ENCODE measurements at regions of chr15 and their contacts with region 1.

Region 1: GRCh38 chr15:40217159-40217824 is 21.6 kb upstream of the PAK6 start:
- DNase-seq: peak; percentile 26
- ATAC-seq: peak; percentile 95
- H3K4me3 ChIP-seq: no peak overlapping the region
- H3K27ac ChIP-seq: no peak overlapping the region
- H3K4me1 ChIP-seq: no peaks in the 10 kb centered on the region
- H3K27me3 ChIP-seq: no peaks in the 10 kb centered on the region
- CTCF ChIP-seq: peak; percentile 72 to 87 (median 82)
- EP300 ChIP-seq: no peak
- POLR2A ChIP-seq: no peak
- RAD21 ChIP-seq: peak; percentile 92

Region 2: GRCh38 chr15:39887832-39888231 is 329.5 kb before region 1 on chr15:
- CTCF ChIA-PET with region 1: interaction called, 13 read pairs
- POLR2A ChIA-PET with region 1: no interaction called
- RAD21 ChIA-PET with region 1: interaction called, 5 read pairs
- SMC1A ChIA-PET with region 1: no interaction called
- in situ Hi-C with region 1: no loop called
- intact Hi-C with region 1: no loop called
- DNase-seq: no peak
- ATAC-seq: peak; percentile 75
- H3K4me3 ChIP-seq: no peak overlapping the region
- H3K27ac ChIP-seq: no peak overlapping the region
- H3K4me1 ChIP-seq: no peaks in the 10 kb centered on the region
- H3K27me3 ChIP-seq: no peaks in the 10 kb centered on the region; a peak in 1 of 4 replicates
- CTCF ChIP-seq: peak; percentile 20 to 55 (median 35); a peak in 4 of 6 replicates
- EP300 ChIP-seq: no peak
- POLR2A ChIP-seq: no peak
- RAD21 ChIP-seq: peak; percentile 26; the same call in 1 of the 2 replicates

Region 3: GRCh38 chr15:40197434-40197833 is 19.9 kb before region 1 on chr15:
- CTCF ChIA-PET with region 1: interaction called, 20 read pairs
- POLR2A ChIA-PET with region 1: no interaction called
- RAD21 ChIA-PET with region 1: interaction called, 3 read pairs
- SMC1A ChIA-PET with region 1: interaction called, 7 read pairs
- in situ Hi-C with region 1: no loop called
- intact Hi-C with region 1: no loop called
- DNase-seq: no peak
- ATAC-seq: no peak
- H3K4me3 ChIP-seq: no peak overlapping the region
- H3K27ac ChIP-seq: no peak overlapping the region
- H3K4me1 ChIP-seq: no peaks in the 10 kb centered on the region
- H3K27me3 ChIP-seq: no peaks in the 10 kb centered on the region
- CTCF ChIP-seq: no peak
- EP300 ChIP-seq: no peak
- POLR2A ChIP-seq: no peak
- RAD21 ChIP-seq: no peak

Region 4: GRCh38 chr15:40238532-40239403 is 21.5 kb after region 1 on chr15 and contains the start of gene PAK6:
- CTCF ChIA-PET with region 1: interaction called, 15 read pairs
- POLR2A ChIA-PET with region 1: interaction called, 6 read pairs
- RAD21 ChIA-PET with region 1: interaction called, 5 read pairs
- SMC1A ChIA-PET with region 1: interaction called, 6 read pairs
- in situ Hi-C with region 1: no loop called
- intact Hi-C with region 1: no loop called
- DNase-seq: no peak
- ATAC-seq: peak; percentile 61
- H3K4me3 ChIP-seq: peak within 1 kb of the TSS; percentile 55
- H3K27ac ChIP-seq: no peak within 1 kb of the TSS
- H3K4me1 ChIP-seq: peaks cover 10% of the 10 kb centered on the region
- H3K27me3 ChIP-seq: no peaks in the 10 kb centered on the region; a peak in 1 of 4 replicates
- CTCF ChIP-seq: no peak
- EP300 ChIP-seq: no peak
- POLR2A ChIP-seq: no peak
- RAD21 ChIP-seq: no peak
- polyA plus RNA-seq, gene PAK6: 0.07 TPM in 1 of 2 experiments, not detected in the other

Region 5: DNA sequence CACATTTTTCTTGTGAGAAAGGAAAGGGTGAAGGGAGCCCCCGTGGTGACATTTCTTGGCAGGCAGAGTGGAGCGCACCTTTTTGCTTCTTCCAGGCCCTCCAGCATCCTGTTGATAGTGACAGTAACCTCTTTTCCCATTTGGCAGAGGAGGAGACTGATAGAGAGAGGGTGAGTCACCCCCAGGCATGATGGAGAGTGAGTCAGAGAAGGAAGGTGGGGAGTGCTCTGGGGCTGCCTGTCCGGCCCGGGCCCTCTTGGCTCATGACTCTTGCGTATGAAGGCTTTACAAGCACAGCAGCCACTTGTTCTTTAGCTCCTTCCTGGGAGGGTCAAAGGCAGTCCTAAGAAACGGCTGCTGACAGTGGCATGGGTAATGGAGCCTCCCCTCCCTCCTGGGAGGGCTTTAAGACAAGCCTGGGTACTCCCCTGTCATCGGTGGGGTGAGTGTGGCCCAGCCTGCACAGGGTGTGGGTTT is 49.6 kb after region 1 on chr15:
- CTCF ChIA-PET with region 1: interaction called, 296 read pairs
- POLR2A ChIA-PET with region 1: no interaction called
- RAD21 ChIA-PET with region 1: interaction called, 9 read pairs
- SMC1A ChIA-PET with region 1: interaction called, 98 read pairs
- in situ Hi-C with region 1: loop called (anchors 5 kb)
- intact Hi-C with region 1: no loop called
- DNase-seq: no peak
- ATAC-seq: no peak
- H3K4me3 ChIP-seq: no peak overlapping the region
- H3K27ac ChIP-seq: no peak overlapping the region
- H3K4me1 ChIP-seq: no peaks in the 10 kb centered on the region
- H3K27me3 ChIP-seq: no peaks in the 10 kb centered on the region
- CTCF ChIP-seq: no peak
- EP300 ChIP-seq: no peak
- POLR2A ChIP-seq: no peak
- RAD21 ChIP-seq: no peak

Region 6: DNA sequence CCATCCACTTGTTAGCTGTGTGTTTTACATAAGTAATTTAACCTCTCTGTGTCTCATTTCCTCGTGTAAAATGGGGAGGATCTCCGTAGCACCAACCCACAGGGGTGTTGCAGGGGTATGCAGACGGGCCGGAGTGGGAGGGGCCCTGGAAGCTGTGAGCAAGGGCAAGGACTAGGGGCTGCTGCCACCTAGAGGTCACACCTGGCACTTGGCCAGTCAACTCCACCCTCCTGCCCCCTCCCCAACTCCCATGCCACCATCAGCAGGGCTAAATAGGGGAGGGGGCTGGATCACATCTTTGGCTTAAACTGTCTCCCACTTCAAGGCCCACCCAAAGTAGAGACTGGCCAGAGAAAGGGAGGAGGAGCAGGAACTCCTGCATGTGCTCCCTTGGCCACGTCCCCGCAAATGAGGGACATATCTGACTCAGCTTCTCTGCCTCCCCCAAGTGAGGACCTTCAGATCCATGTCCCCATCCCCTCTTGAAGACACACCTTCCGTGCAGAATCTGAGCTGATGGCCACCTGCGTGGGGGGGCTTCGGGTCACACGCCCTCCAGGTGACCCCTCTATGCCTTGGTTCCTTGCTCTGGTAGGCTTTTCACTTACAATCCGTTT is 120.9 kb after region 1 on chr15:
- CTCF ChIA-PET with region 1: interaction called, 20 read pairs
- POLR2A ChIA-PET with region 1: no interaction called
- RAD21 ChIA-PET with region 1: interaction called, 9 read pairs
- SMC1A ChIA-PET with region 1: interaction called, 10 read pairs
- in situ Hi-C with region 1: no loop called
- intact Hi-C with region 1: no loop called
- DNase-seq: no peak
- ATAC-seq: peak; percentile 94
- H3K4me3 ChIP-seq: no peak overlapping the region
- H3K27ac ChIP-seq: no peak overlapping the region
- H3K4me1 ChIP-seq: peaks cover 9% of the 10 kb centered on the region
- H3K27me3 ChIP-seq: no peaks in the 10 kb centered on the region; a peak in 1 of 4 replicates
- CTCF ChIP-seq: peak; percentile 90 to 95 (median 92)
- EP300 ChIP-seq: no peak
- POLR2A ChIP-seq: no peak
- RAD21 ChIP-seq: peak; percentile 73

Measured in GM12878 (cell line).